T-cell (primary cell): ENCODE measurements at regions of chr1 and their contacts with region 1.

Region 1: GRCh38 chr1:117534995-117535467 is 70.8 kb upstream of the TENT5C start:
- DNase-seq: peak in 27 of 35 experiments; percentile 0 to 80 (median 23)
- ATAC-seq: peak; percentile 73 to 86 (median 77)
- H3K4me3 ChIP-seq: no peak overlapping the region
- H3K4me3 Mint-ChIP-seq: no peak overlapping the region
- H3K27ac ChIP-seq: no peak overlapping the region
- H3K27ac Mint-ChIP-seq: peak overlapping the region; percentile 24 to 46
- H3K4me1 ChIP-seq: peaks cover 2 to 10% of the 10 kb centered on the region in 2 experiments
- H3K4me1 Mint-ChIP-seq: peaks cover 0 to 2% (median 0%) of the 10 kb centered on the region in 3 donors
- H3K27me3 ChIP-seq: no peaks in the 10 kb centered on the region
- H3K27me3 Mint-ChIP-seq: no peaks in the 10 kb centered on the region

Region 2: DNA sequence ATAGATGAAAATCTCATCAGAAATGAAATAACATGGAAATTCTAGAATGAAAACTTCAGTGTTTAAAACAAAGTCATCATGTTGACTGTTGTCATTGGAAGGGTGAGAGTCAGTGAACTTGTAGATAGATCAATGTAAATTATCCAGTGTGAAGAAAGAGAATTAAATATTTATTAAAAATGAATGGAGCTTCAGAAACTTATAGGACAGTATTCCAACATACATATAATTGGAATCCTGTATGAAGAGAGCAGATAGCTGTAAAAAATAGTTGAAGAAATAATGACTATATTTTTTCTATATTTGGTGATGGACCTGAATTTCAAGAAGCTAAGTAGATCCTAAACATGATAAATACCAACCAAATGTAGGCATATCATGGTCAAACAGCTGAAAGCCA is 107.7 kb before region 1 on chr1:
- CTCF ChIA-PET with region 1: no interaction called
- POLR2A ChIA-PET with region 1: no interaction called
- DNase-seq: no peak
- ATAC-seq: no peak
- H3K4me3 ChIP-seq: no peak overlapping the region
- H3K4me3 Mint-ChIP-seq: no peak overlapping the region
- H3K27ac ChIP-seq: no peak overlapping the region
- H3K27ac Mint-ChIP-seq: no peak overlapping the region
- H3K4me1 ChIP-seq: no peaks in the 10 kb centered on the region
- H3K4me1 Mint-ChIP-seq: peaks cover 0 to 4% (median 2%) of the 10 kb centered on the region in 3 donors
- H3K27me3 ChIP-seq: no peaks in the 10 kb centered on the region
- H3K27me3 Mint-ChIP-seq: no peaks in the 10 kb centered on the region

Region 3: GRCh38 chr1:117512743-117513321 is 22.2 kb before region 1 on chr1:
- CTCF ChIA-PET with region 1: interaction called, 4 to 12 read pairs
- POLR2A ChIA-PET with region 1: no interaction called
- DNase-seq: peak in 1 of 35 experiments; percentile 54
- ATAC-seq: no peak
- H3K4me3 ChIP-seq: no peak overlapping the region
- H3K4me3 Mint-ChIP-seq: no peak overlapping the region
- H3K27ac ChIP-seq: no peak overlapping the region
- H3K27ac Mint-ChIP-seq: no peak overlapping the region
- H3K4me1 ChIP-seq: no peaks in the 10 kb centered on the region
- H3K4me1 Mint-ChIP-seq: no peaks in the 10 kb centered on the region
- H3K27me3 ChIP-seq: no peaks in the 10 kb centered on the region
- H3K27me3 Mint-ChIP-seq: no peaks in the 10 kb centered on the region

Region 4: DNA sequence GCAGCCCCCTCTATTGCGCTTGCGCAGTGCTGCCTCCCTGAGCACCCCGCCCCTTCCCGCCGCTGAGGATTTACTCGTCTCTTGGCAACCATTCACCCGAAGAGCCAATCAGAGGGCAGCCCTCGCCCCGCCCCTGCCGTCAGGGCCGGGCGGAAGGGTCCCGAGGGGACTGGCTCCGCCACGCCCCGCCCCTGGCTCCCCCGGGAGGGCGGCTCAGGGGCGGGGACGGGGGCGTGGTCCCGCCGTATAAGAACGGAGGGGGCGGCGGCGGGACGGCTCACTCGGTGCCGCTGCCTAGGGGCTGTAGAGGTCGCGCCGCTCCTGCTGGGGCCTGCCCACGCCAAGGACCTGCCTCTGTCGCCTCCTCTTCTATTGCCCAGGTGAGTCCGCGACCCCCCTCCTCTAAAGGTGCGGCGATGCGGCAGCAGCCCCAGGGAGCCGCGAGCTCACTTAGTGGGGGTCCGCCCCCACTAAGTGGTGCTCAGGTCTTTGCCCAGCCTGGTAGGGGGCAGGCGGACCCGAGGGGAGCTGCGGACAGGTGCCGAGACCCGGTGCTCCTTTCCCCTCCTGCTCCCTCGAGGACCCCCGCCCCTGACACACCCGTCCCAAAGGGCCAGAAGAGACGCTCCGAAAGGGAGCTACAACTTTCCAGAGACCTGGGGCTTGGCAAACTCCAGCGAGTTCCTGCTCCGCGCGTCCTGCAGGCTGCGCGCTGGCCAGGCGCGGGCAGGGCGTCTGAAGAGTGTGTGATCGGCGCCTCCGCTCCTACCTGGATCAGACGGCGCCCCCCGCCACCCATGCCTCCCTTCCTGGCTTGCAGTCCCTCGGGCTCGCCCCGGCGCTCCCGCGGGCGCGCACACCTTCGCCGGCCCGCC is 71.0 kb after region 1 on chr1 and contains the start of gene TENT5C:
- CTCF ChIA-PET with region 1: interaction called, 8 to 13 read pairs
- POLR2A ChIA-PET with region 1: interaction called in 1 of 2 experiments, 5 read pairs
- DNase-seq: peak; percentile 96 to 99 (median 98)
- ATAC-seq: peak; percentile 90 to 96 (median 92)
- H3K4me3 ChIP-seq: peak within 1 kb of the TSS; percentile 91 to 92
- H3K4me3 Mint-ChIP-seq: peak within 1 kb of the TSS; percentile 97 to 98 (median 98)
- H3K27ac ChIP-seq: peak within 1 kb of the TSS; percentile 94
- H3K27ac Mint-ChIP-seq: peak within 1 kb of the TSS; percentile 95 to 98
- H3K4me1 ChIP-seq: peaks cover 11 to 32% of the 10 kb centered on the region in 2 experiments
- H3K4me1 Mint-ChIP-seq: peaks cover 41 to 52% (median 45%) of the 10 kb centered on the region in 3 donors
- H3K27me3 ChIP-seq: peaks cover 2% of the 10 kb centered on the region in 2 experiments
- H3K27me3 Mint-ChIP-seq: no peaks in the 10 kb centered on the region
- total RNA-seq, gene TENT5C: 7.6 to 133 (median 11.2) TPM

Region 5: GRCh38 chr1:117654493-117655219 is 119.6 kb after region 1 on chr1:
- CTCF ChIA-PET with region 1: interaction called, 7 to 11 read pairs
- POLR2A ChIA-PET with region 1: interaction called in 1 of 2 experiments, 4 read pairs
- DNase-seq: peak in 2 of 35 experiments; percentile 28 to 55
- ATAC-seq: peak in 1 of 4 experiments; percentile 22
- H3K4me3 ChIP-seq: peak overlapping the region in 1 of 2 donors; percentile 11
- H3K4me3 Mint-ChIP-seq: peak overlapping the region; percentile 31 to 77 (median 49)
- H3K27ac ChIP-seq: peak overlapping the region; percentile 61
- H3K27ac Mint-ChIP-seq: peak overlapping the region; percentile 69 to 71
- H3K4me1 ChIP-seq: peaks cover 53 to 96% of the 10 kb centered on the region in 2 experiments
- H3K4me1 Mint-ChIP-seq: peaks cover 84 to 91% (median 89%) of the 10 kb centered on the region in 3 donors
- H3K27me3 ChIP-seq: peaks cover 0 to 9% of the 10 kb centered on the region in 2 experiments
- H3K27me3 Mint-ChIP-seq: peaks cover 2 to 7% of the 10 kb centered on the region in 2 donors

Region 6: GRCh38 chr1:117674521-117675397 is 139.7 kb after region 1 on chr1:
- CTCF ChIA-PET with region 1: interaction called, 72 to 76 read pairs
- POLR2A ChIA-PET with region 1: no interaction called
- DNase-seq: peak in 34 of 35 experiments; percentile 35 to 79 (median 57)
- ATAC-seq: peak; percentile 75 to 91 (median 80)
- H3K4me3 ChIP-seq: no peak overlapping the region
- H3K4me3 Mint-ChIP-seq: no peak overlapping the region
- H3K27ac ChIP-seq: no peak overlapping the region
- H3K27ac Mint-ChIP-seq: peak overlapping the region in 1 of 2 donors; percentile 11
- H3K4me1 ChIP-seq: peaks cover 0 to 13% of the 10 kb centered on the region in 2 experiments
- H3K4me1 Mint-ChIP-seq: peaks cover 0 to 22% (median 11%) of the 10 kb centered on the region in 3 donors
- H3K27me3 ChIP-seq: peaks cover 0 to 17% of the 10 kb centered on the region in 2 experiments
- H3K27me3 Mint-ChIP-seq: no peaks in the 10 kb centered on the region

Region 7: GRCh38 chr1:117814856-117815797 is 280.1 kb after region 1 on chr1:
- CTCF ChIA-PET with region 1: no interaction called
- POLR2A ChIA-PET with region 1: no interaction called
- DNase-seq: no peak
- ATAC-seq: no peak
- H3K4me3 ChIP-seq: no peak overlapping the region
- H3K4me3 Mint-ChIP-seq: no peak overlapping the region
- H3K27ac ChIP-seq: no peak overlapping the region
- H3K27ac Mint-ChIP-seq: no peak overlapping the region
- H3K4me1 ChIP-seq: no peaks in the 10 kb centered on the region
- H3K4me1 Mint-ChIP-seq: no peaks in the 10 kb centered on the region
- H3K27me3 ChIP-seq: peaks cover 0 to 4% of the 10 kb centered on the region in 2 experiments
- H3K27me3 Mint-ChIP-seq: no peaks in the 10 kb centered on the region

Region 8: GRCh38 chr1:117871013-117871412 is 336.0 kb after region 1 on chr1:
- CTCF ChIA-PET with region 1: interaction called in 1 of 2 experiments, 17 read pairs
- POLR2A ChIA-PET with region 1: no interaction called
- DNase-seq: no peak
- ATAC-seq: no peak
- H3K4me3 ChIP-seq: no peak overlapping the region
- H3K4me3 Mint-ChIP-seq: no peak overlapping the region
- H3K27ac ChIP-seq: no peak overlapping the region
- H3K27ac Mint-ChIP-seq: no peak overlapping the region
- H3K4me1 ChIP-seq: no peaks in the 10 kb centered on the region
- H3K4me1 Mint-ChIP-seq: no peaks in the 10 kb centered on the region
- H3K27me3 ChIP-seq: no peaks in the 10 kb centered on the region
- H3K27me3 Mint-ChIP-seq: no peaks in the 10 kb centered on the region

Region 9: DNA sequence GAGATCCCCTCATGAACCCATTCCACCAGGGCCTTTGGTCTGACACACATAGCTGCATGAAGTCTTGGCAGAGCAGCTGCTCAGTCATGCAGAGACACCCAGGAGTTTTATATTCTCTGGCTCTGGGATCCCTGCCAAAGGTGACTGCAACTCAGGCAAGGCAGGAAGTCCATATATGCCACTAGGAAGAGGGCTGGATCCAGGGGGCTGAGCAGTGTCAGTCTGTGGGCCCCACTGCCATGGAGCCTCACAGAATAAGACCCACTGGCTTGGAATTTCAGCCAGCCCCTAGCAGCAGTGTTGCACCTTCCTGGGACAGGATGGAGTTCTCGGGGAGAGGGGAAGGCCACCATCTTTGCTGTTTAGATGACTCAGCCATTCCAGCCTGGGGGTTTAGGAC is 1253.4 kb after region 1 on chr1:
- CTCF ChIA-PET with region 1: no interaction called
- POLR2A ChIA-PET with region 1: no interaction called
- DNase-seq: no peak
- ATAC-seq: no peak
- H3K4me3 ChIP-seq: no peak overlapping the region
- H3K4me3 Mint-ChIP-seq: no peak overlapping the region
- H3K27ac ChIP-seq: no peak overlapping the region
- H3K27ac Mint-ChIP-seq: no peak overlapping the region
- H3K4me1 ChIP-seq: no peaks in the 10 kb centered on the region
- H3K4me1 Mint-ChIP-seq: no peaks in the 10 kb centered on the region
- H3K27me3 ChIP-seq: no peaks in the 10 kb centered on the region
- H3K27me3 Mint-ChIP-seq: no peaks in the 10 kb centered on the region